Naive thymus-derived CD8-positive, alpha-beta T cell (primary cell): ENCODE measurements at regions of chr11 and their contacts with region 1.

Region 1: DNA sequence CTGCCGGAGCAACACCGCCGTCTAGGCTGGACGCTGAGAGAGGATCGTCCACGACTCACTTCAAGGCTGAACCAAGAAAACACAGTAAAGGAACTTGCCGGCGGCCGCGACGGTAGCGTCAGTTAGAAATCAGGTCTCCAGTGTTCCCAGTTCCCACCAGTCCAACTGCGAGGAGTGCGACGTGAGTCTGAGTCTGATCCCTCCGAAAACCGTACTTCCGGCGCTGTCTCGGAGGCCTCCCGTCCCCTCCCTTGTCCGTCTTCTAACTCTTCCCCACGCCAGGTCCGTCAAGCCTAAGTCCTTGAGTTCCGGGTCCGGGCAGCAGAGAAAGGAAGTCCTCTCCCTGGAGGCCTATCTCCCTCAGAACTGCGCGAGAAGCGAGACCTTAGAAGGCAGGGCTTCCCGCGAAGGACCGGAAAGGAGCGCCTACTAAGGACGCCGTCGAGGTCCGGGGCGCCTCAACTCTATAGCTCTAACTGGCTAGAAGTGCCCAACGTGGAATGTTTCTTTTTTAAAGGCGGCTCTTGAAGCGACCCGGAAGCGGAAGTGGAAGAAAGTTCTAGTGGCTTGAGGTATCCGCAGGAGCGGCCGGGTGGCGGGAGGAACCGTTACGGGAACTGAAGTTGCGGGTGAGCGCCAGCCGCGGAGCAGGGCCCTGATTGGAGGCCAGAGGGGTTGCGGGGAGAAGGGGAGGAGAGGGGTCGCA is at the starts of genes BANF1 and EIF1AD:
- DNase-seq: peak; percentile 69 to 99 (median 94)
- ATAC-seq: peak; percentile 79 to 88
- H3K4me3 Mint-ChIP-seq: peak within 1 kb of the TSS; percentile 98 to 100 (median 99)
- H3K27ac Mint-ChIP-seq: peak within 1 kb of the TSS; percentile 98 to 100 (median 99)
- H3K4me1 Mint-ChIP-seq: peaks cover 17 to 54% (median 48%) of the 10 kb centered on the region in 4 donors
- H3K27me3 Mint-ChIP-seq: no peaks in the 10 kb centered on the region
- polyA plus RNA-seq, gene BANF1: 225 to 250 (median 241) TPM
- polyA plus RNA-seq, gene EIF1AD: 11.5 to 18.7 (median 14.3) TPM

Region 2: DNA sequence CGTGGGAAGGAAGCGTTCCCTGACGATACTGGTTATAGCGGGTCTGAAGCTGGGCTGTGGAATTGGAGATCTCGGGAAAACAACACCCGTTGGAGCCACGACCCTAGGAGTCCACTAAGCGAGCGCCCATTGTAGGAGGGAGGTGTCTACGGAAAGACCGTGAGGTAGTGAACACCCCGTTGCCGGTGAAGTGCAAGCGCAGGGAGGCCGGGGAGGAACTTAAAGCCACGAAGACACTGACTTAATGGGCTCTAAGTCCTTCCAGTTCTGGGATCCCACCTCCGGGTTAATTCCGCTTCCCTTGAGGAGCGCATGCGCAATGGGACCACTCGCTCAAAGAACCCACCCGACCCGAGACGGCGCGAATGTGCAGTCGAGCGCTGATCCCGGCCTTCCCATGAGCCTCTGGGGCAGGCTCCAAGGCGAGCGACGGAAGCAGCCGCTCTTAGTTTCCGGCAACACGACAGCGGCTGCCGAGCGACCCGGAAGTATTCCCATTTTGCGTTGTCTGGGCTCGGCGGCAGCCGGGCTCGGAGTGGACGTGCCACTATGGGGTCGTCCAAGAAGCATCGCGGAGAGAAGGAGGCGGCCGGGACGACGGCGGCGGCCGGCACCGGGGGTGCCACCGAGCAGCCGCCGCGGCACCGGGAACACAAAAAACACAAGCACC is 40.7 kb before region 1 on chr11 and contains the start of gene SART1:
- POLR2A ChIA-PET with region 1: interaction called, 13 read pairs
- DNase-seq: peak; percentile 91 to 99 (median 96)
- ATAC-seq: peak; percentile 91 to 93
- H3K4me3 Mint-ChIP-seq: peak within 1 kb of the TSS; percentile 93 to 99 (median 98)
- H3K27ac Mint-ChIP-seq: peak within 1 kb of the TSS; percentile 97 to 100 (median 98)
- H3K4me1 Mint-ChIP-seq: peaks cover 23 to 53% (median 51%) of the 10 kb centered on the region in 4 donors
- H3K27me3 Mint-ChIP-seq: no peaks in the 10 kb centered on the region
- polyA plus RNA-seq, gene SART1: 16.2 to 57.3 (median 30.4) TPM